GM12878 (cell line): ENCODE measurements at regions of chr10 and their contacts with region 1.

Region 1: GRCh38 chr10:102009801-102010425 is 46.1 kb downstream of the ARMH3 start:
- DNase-seq: peak; percentile 62
- ATAC-seq: peak; percentile 99
- H3K4me3 ChIP-seq: no peak overlapping the region
- H3K27ac ChIP-seq: no peak overlapping the region
- H3K4me1 ChIP-seq: peaks cover 9% of the 10 kb centered on the region
- H3K27me3 ChIP-seq: no peaks in the 10 kb centered on the region
- CTCF ChIP-seq: peak; percentile 97 to 99 (median 99); a peak in 5 of 6 replicates
- EP300 ChIP-seq: no peak
- POLR2A ChIP-seq: no peak
- RAD21 ChIP-seq: peak; percentile 100

Region 2: DNA sequence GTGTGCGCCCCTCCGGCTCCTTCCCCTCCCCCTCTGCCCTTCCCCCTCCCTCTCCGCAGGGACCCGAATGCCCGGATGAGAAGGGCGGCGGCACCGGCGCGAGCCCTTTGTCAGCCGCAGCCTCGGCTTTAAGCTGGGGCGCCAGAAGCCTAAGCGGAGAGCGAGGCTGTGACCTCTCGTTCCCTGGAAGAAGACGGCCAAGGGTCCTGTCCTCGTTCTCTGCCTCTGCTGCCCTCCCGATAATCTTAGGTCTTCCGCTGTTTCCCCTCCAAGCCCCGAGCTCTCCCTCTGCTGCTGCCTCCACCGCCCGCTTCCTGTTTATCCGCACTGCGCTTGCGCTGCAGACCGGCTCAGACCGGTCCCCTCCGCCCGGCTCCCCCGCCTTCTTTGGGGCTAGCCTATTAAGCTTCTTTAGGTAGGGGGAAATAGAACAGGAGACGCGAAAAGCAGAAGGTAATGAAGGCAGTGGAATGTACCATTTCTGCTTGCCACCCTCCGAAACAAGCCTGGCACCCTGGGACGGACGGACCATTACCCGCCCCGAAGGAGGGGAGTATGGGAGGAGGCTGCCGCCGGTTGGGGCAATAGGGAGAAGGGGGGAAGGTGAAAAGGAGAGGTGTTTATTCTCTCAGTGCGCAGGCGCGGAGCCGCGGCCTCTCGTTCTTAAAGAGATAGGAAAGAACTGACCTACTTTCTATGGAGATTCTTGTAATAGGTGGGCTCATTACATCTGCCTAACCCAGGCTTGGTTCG is 191.6 kb before region 1 on chr10 and contains the start of gene OGA:
- CTCF ChIA-PET with region 1: interaction called, 31 read pairs
- POLR2A ChIA-PET with region 1: no interaction called
- RAD21 ChIA-PET with region 1: interaction called, 8 read pairs
- SMC1A ChIA-PET with region 1: interaction called, 9 read pairs
- in situ Hi-C with region 1: no loop called
- intact Hi-C with region 1: no loop called
- DNase-seq: peak; percentile 100
- ATAC-seq: peak; percentile 91
- H3K4me3 ChIP-seq: peak within 1 kb of the TSS; percentile 81
- H3K27ac ChIP-seq: peak within 1 kb of the TSS; percentile 95
- H3K4me1 ChIP-seq: peaks cover 11% of the 10 kb centered on the region; the same call in 1 of the 2 replicates
- H3K27me3 ChIP-seq: no peaks in the 10 kb centered on the region
- CTCF ChIP-seq: no peak
- EP300 ChIP-seq: peak; percentile 58 to 73; a peak in 2 of 4 replicates
- POLR2A ChIP-seq: peak; percentile 92
- RAD21 ChIP-seq: no peak
- polyA plus RNA-seq, gene OGA: 23.0 to 28.3 TPM

Region 3: DNA sequence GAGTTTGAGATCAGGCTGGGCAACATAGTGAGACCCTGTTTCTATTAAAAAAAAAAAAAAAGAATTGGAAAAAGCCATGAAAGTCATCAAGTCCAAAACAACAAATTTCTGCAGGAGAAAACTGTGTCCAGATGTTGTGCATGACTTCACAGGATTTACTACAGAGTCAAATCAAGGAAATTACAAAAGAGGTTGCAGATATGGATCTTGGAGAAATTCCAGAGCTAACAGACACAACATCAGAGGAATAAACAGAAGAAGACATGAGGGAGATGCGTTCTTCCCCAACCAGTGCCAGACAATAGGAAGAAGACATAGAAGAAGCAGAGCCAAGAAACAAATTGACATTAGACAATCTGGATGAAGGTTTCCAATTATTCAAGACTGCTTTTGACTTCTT is 142.0 kb before region 1 on chr10:
- CTCF ChIA-PET with region 1: interaction called, 7 read pairs
- POLR2A ChIA-PET with region 1: interaction called, 3 read pairs
- RAD21 ChIA-PET with region 1: interaction called, 10 read pairs
- SMC1A ChIA-PET with region 1: interaction called, 9 read pairs
- in situ Hi-C with region 1: no loop called
- intact Hi-C with region 1: no loop called
- DNase-seq: no peak
- ATAC-seq: no peak
- H3K4me3 ChIP-seq: no peak overlapping the region
- H3K27ac ChIP-seq: no peak overlapping the region
- H3K4me1 ChIP-seq: no peaks in the 10 kb centered on the region
- H3K27me3 ChIP-seq: no peaks in the 10 kb centered on the region
- CTCF ChIP-seq: no peak
- EP300 ChIP-seq: no peak
- POLR2A ChIP-seq: no peak
- RAD21 ChIP-seq: no peak

Region 4: GRCh38 chr10:101903827-101904550 is 105.9 kb before region 1 on chr10:
- CTCF ChIA-PET with region 1: interaction called, 77 read pairs
- POLR2A ChIA-PET with region 1: interaction called, 26 read pairs
- RAD21 ChIA-PET with region 1: interaction called, 352 read pairs
- SMC1A ChIA-PET with region 1: interaction called, 369 read pairs
- in situ Hi-C with region 1: no loop called
- intact Hi-C with region 1: no loop called
- DNase-seq: peak; percentile 88
- ATAC-seq: peak; percentile 77
- H3K4me3 ChIP-seq: peak overlapping the region; percentile 4; the same call in 1 of the 2 replicates
- H3K27ac ChIP-seq: peak overlapping the region; percentile 91
- H3K4me1 ChIP-seq: peaks cover 45% of the 10 kb centered on the region
- H3K27me3 ChIP-seq: no peaks in the 10 kb centered on the region
- CTCF ChIP-seq: 0 out of 6 replicates have a peak, but pooled peaks of 1 of the 3 experiments have one; percentile 0
- EP300 ChIP-seq: peak; percentile 71 to 92; a peak in 3 of 4 replicates
- POLR2A ChIP-seq: peak; percentile 44; the same call in 1 of the 2 replicates
- RAD21 ChIP-seq: no peak

Region 5: GRCh38 chr10:101968940-101969321 is 41.0 kb before region 1 on chr10:
- CTCF ChIA-PET with region 1: interaction called, 73 read pairs
- POLR2A ChIA-PET with region 1: interaction called, 7 read pairs
- RAD21 ChIA-PET with region 1: interaction called, 13 read pairs
- SMC1A ChIA-PET with region 1: interaction called, 298 read pairs
- in situ Hi-C with region 1: no loop called
- intact Hi-C with region 1: no loop called
- DNase-seq: peak; percentile 76
- ATAC-seq: peak; percentile 72
- H3K4me3 ChIP-seq: no peak overlapping the region
- H3K27ac ChIP-seq: peak overlapping the region; percentile 99
- H3K4me1 ChIP-seq: peaks cover 80% of the 10 kb centered on the region
- H3K27me3 ChIP-seq: no peaks in the 10 kb centered on the region
- CTCF ChIP-seq: no peak
- EP300 ChIP-seq: peak in 1 of 2 experiments; percentile 74
- POLR2A ChIP-seq: no peak
- RAD21 ChIP-seq: no peak

Region 6: DNA sequence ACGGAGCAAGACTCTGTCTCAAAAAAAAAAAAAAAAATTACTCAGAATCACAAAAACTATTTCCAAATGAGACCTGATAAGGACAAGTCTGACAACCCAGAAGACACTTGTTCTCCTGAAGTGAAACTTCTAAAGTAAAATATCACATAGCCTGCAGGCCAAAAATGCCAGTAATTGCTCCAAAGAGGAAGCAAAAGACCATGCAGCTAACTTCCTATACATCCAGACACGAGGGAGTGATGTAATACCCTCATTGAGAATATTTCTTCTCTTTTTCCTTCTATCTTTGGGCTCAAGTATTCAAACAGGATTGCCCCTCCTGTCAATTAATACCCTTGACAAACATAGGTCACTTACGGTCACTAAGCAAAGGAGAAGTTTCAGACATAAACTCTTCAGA is 14.9 kb after region 1 on chr10:
- CTCF ChIA-PET with region 1: interaction called, 24 read pairs
- POLR2A ChIA-PET with region 1: interaction called, 4 read pairs
- RAD21 ChIA-PET with region 1: interaction called, 7 read pairs
- SMC1A ChIA-PET with region 1: interaction called, 18 read pairs
- in situ Hi-C with region 1: no loop called
- intact Hi-C with region 1: no loop called
- DNase-seq: no peak
- ATAC-seq: no peak
- H3K4me3 ChIP-seq: no peak overlapping the region
- H3K27ac ChIP-seq: no peak overlapping the region
- H3K4me1 ChIP-seq: no peaks in the 10 kb centered on the region
- H3K27me3 ChIP-seq: no peaks in the 10 kb centered on the region
- CTCF ChIP-seq: no peak
- EP300 ChIP-seq: no peak
- POLR2A ChIP-seq: no peak
- RAD21 ChIP-seq: no peak

Region 7: GRCh38 chr10:102072673-102073527 is 63.0 kb after region 1 on chr10:
- CTCF ChIA-PET with region 1: interaction called, 71 read pairs
- POLR2A ChIA-PET with region 1: no interaction called
- RAD21 ChIA-PET with region 1: interaction called, 20 read pairs
- SMC1A ChIA-PET with region 1: interaction called, 19 read pairs
- in situ Hi-C with region 1: no loop called
- intact Hi-C with region 1: loop called (anchors 2 kb)
- DNase-seq: no peak
- ATAC-seq: peak; percentile 99
- H3K4me3 ChIP-seq: no peak overlapping the region
- H3K27ac ChIP-seq: no peak overlapping the region
- H3K4me1 ChIP-seq: no peaks in the 10 kb centered on the region
- H3K27me3 ChIP-seq: no peaks in the 10 kb centered on the region
- CTCF ChIP-seq: peak; percentile 94 to 96 (median 95)
- EP300 ChIP-seq: no peak
- POLR2A ChIP-seq: no peak
- RAD21 ChIP-seq: peak; percentile 92

Region 8: GRCh38 chr10:102208311-102209035 is 198.6 kb after region 1 on chr10:
- CTCF ChIA-PET with region 1: no interaction called
- POLR2A ChIA-PET with region 1: no interaction called
- RAD21 ChIA-PET with region 1: no interaction called
- SMC1A ChIA-PET with region 1: no interaction called
- in situ Hi-C with region 1: no loop called
- intact Hi-C with region 1: no loop called
- DNase-seq: no peak
- ATAC-seq: no peak
- H3K4me3 ChIP-seq: no peak overlapping the region
- H3K27ac ChIP-seq: no peak overlapping the region
- H3K4me1 ChIP-seq: no peaks in the 10 kb centered on the region; the same call in 1 of the 2 replicates
- H3K27me3 ChIP-seq: no peaks in the 10 kb centered on the region
- CTCF ChIP-seq: no peak
- EP300 ChIP-seq: no peak
- POLR2A ChIP-seq: no peak
- RAD21 ChIP-seq: no peak